Heart left ventricle (tissue), 16 donors: ENCODE measurements at regions of chr1 and their contacts with region 1.

Region 1: DNA sequence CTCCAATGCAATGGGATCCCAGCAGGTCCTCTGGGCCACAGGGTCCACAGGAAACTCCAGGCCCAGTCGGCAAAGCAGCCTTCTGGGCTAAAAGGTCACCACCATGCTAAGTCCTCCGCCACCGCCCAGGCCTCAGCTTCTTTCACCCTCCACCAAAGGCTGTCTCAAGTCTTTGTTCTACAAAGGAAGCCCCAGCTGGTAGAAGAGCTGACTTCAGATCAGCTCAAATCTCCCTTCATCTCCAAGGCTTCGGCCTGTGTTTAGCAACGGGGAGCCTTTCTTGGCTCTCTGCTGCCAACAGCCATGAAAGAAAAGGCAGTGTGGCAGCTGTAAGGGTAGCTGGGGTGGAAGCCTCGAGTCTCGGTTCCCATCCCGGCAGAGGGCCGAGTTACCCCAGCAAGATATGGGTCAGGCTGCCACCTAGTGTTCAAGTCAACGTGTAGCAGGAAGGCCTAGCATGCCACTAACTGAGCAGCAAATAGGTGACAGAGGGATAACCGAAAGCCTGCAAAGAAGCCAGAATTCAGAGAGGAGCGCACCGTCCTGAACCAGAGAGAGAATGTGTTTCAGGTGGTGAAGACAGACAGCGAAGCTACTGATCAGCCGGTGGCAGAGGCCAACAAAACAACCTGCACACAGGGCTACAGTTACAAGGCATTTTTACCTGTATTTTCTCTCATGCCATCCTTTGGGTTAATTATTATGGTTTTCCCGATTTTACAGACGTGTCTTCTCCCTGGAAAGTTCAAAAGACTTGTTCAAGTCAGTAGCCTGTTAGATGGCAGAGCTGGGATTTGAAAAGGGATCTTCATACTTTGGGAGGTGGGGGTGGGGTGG is 26.8 kb upstream of the CRNN start:
- DNase-seq: peak; percentile 60 to 73 (median 68)
- ATAC-seq: peak; percentile 66 to 90 (median 83)
- H3K4me3 ChIP-seq: no peak overlapping the region
- H3K27ac ChIP-seq: no peak overlapping the region
- H3K4me1 ChIP-seq: peaks cover 0 to 31% (median 11%) of the 10 kb centered on the region in 12 donors
- H3K27me3 ChIP-seq: peaks cover 0 to 19% (median 0%) of the 10 kb centered on the region in 9 donors
- CTCF ChIP-seq: peak; percentile 71 to 84 (median 80)
- POLR2A ChIP-seq: no peak

Region 2: DNA sequence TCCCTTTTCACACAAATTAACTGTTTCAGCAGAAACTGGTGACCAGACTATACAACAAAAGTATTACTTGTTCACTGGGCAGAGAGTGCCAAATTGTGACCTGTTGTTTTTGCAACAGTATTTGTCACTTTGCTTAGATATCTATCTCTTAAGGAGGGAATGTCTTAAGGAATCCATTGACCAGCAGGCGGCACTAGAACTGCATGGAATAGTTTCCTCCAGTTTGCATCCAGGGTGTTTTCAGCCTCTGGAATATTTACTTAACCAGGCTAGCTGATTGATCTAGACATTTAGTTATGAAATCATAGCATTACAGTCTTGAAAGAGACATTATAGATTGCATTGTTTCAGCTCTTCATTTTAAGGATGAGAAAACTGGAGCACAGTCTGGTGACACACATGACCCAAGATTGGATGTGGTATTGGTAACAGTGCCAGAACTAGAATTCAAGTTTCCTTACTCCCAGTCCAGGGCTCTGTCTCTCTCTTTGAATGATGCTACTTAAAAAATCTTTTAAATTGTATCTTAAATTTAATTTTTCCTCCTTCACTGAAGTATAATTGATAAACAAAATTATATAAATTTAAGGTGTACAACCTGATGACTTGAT is 298.8 kb before region 1 on chr1:
- intact Hi-C with region 1: loop called in 1 of 10 experiments (anchors 5 kb)
- DNase-seq: peak in 3 of 5 donors; percentile 24 to 45 (median 27)
- ATAC-seq: peak in 2 of 4 donors; percentile 46 to 55
- H3K4me3 ChIP-seq: no peak overlapping the region
- H3K27ac ChIP-seq: no peak overlapping the region
- H3K4me1 ChIP-seq: no peaks in the 10 kb centered on the region
- H3K27me3 ChIP-seq: peaks cover 0 to 31% (median 7%) of the 10 kb centered on the region in 9 donors
- CTCF ChIP-seq: peak; percentile 56 to 77 (median 66)
- POLR2A ChIP-seq: no peak

Region 3: DNA sequence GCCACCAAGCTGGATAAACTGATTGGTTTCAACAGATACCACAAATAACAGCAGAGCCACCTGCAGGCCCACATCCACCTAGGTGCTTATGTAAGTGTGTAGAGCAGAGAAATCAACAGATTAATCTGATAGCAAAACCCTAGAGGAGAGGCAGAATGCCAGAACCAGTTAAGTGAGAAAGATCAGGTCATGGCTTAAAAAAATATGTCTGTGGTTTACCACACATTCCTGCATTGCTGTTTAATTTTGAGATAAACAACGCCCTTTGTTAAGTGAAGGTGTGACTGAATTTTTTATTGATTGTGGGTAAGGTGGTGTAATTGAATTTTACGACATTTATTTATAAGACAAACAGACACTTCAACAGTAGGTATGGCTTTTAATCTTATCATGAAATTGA is 47.9 kb before region 1 on chr1:
- intact Hi-C with region 1: no loop called
- DNase-seq: no peak
- ATAC-seq: no peak
- H3K4me3 ChIP-seq: no peak overlapping the region
- H3K27ac ChIP-seq: no peak overlapping the region
- H3K4me1 ChIP-seq: no peaks in the 10 kb centered on the region
- H3K27me3 ChIP-seq: peaks cover 0 to 10% (median 0%) of the 10 kb centered on the region in 9 donors
- CTCF ChIP-seq: no peak
- POLR2A ChIP-seq: no peak